ENCODE measurements at regions of chr19 and their contacts with region 1.

Region 1: GRCh38 chr19:2782936-2783780 is at the start of gene SGTA:
- DNase-seq: peak; percentile 82 to 97 (median 95)
- ATAC-seq: peak; percentile 73
- H3K4me3 ChIP-seq: peak within 1 kb of the TSS; percentile 90
- H3K4me3 Mint-ChIP-seq: peak within 1 kb of the TSS; percentile 83 to 98 (median 88)
- H3K27ac ChIP-seq: peak within 1 kb of the TSS; percentile 95
- H3K27ac Mint-ChIP-seq: peak within 1 kb of the TSS; percentile 78 to 97 (median 92)
- H3K4me1 ChIP-seq: peaks cover 33 to 35% of the 10 kb centered on the region in 2 donors
- H3K4me1 Mint-ChIP-seq: peaks cover 29 to 64% (median 51%) of the 10 kb centered on the region in 7 donors
- H3K27me3 ChIP-seq: no peaks in the 10 kb centered on the region
- H3K27me3 Mint-ChIP-seq: no peaks in the 10 kb centered on the region
- total RNA-seq, gene SGTA: 32.2 to 47.8 (median 37.9) TPM

Region 2: DNA sequence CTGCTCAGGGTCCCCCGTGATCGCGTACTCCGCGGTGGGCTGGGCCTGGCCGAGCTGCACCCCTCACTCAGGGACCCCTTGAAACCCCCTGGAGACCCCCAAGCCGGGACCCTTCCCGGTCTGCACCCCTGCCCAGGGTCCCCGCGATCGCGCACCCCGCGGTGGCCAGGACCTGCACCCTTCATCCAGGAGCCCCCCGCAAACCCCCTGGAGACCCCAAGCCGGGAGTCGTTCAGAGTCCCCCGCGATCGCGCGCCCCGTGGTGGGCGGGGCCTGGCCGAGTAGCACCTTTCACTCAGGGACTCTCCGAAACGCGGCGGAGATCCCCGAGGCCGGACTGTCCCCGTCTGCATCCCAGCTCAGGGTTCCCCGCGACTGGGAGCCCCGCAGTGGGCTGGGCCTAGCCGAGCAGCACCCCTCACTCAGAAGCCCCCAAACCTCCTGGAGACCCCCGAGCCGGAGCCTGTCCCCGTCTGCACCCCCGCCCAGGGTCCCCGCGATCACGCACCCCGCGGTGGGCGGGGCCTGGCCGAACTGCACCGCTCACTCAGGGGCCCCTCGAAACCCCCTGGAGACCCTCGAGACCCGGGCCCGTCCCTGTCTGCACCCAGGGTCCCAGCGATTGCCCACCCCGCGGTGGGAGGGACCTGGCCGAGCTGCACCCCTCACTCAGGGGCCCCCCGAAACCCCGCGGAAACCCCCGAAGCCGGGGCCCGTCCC is 327.1 kb before region 1 on chr19:
- CTCF ChIA-PET with region 1: no interaction called
- POLR2A ChIA-PET with region 1: no interaction called
- intact Hi-C with region 1: loop called in 1 of 2 experiments (anchors 2 kb)
- DNase-seq: peak in 5 of 9 donors; percentile 14 to 68 (median 29)
- ATAC-seq: peak; percentile 59
- H3K4me3 ChIP-seq: peak overlapping the region; percentile 79
- H3K4me3 Mint-ChIP-seq: peak overlapping the region; percentile 77 to 90 (median 84)
- H3K27ac ChIP-seq: peak overlapping the region; percentile 86
- H3K27ac Mint-ChIP-seq: peak overlapping the region in 6 of 9 donors; percentile 77 to 88 (median 82)
- H3K4me1 ChIP-seq: peaks cover 14 to 18% of the 10 kb centered on the region in 2 donors
- H3K4me1 Mint-ChIP-seq: peaks cover 14 to 28% (median 18%) of the 10 kb centered on the region in 7 donors
- H3K27me3 ChIP-seq: no peaks in the 10 kb centered on the region
- H3K27me3 Mint-ChIP-seq: no peaks in the 10 kb centered on the region

Region 3: GRCh38 chr19:2820112-2820702 is 37.0 kb after region 1 on chr19:
- CTCF ChIA-PET with region 1: no interaction called
- POLR2A ChIA-PET with region 1: interaction called, 3 read pairs
- intact Hi-C with region 1: loop called (anchors 1 to 2 kb)
- DNase-seq: no peak
- ATAC-seq: no peak
- H3K4me3 ChIP-seq: peak overlapping the region; percentile 79
- H3K4me3 Mint-ChIP-seq: peak overlapping the region; percentile 79 to 90 (median 86)
- H3K27ac ChIP-seq: peak overlapping the region; percentile 76
- H3K27ac Mint-ChIP-seq: peak overlapping the region in 5 of 9 donors; percentile 22 to 80 (median 52)
- H3K4me1 ChIP-seq: peaks cover 3 to 4% of the 10 kb centered on the region in 2 donors
- H3K4me1 Mint-ChIP-seq: peaks cover 3 to 19% (median 6%) of the 10 kb centered on the region in 7 donors
- H3K27me3 ChIP-seq: no peaks in the 10 kb centered on the region
- H3K27me3 Mint-ChIP-seq: no peaks in the 10 kb centered on the region

Region 4: GRCh38 chr19:2944775-2945574 is 161.8 kb after region 1 on chr19 and contains the start of gene ZNF77:
- CTCF ChIA-PET with region 1: no interaction called
- POLR2A ChIA-PET with region 1: no interaction called
- intact Hi-C with region 1: loop called in 1 of 2 experiments (anchors 1 kb)
- DNase-seq: peak; percentile 93 to 99 (median 99)
- ATAC-seq: peak; percentile 99
- H3K4me3 ChIP-seq: peak within 1 kb of the TSS; percentile 86
- H3K4me3 Mint-ChIP-seq: peak within 1 kb of the TSS; percentile 94 to 99 (median 97)
- H3K27ac ChIP-seq: peak within 1 kb of the TSS; percentile 87
- H3K27ac Mint-ChIP-seq: peak within 1 kb of the TSS; percentile 90 to 99 (median 98)
- H3K4me1 ChIP-seq: peaks cover 11 to 15% of the 10 kb centered on the region in 2 donors
- H3K4me1 Mint-ChIP-seq: peaks cover 15 to 43% (median 34%) of the 10 kb centered on the region in 7 donors
- H3K27me3 ChIP-seq: no peaks in the 10 kb centered on the region
- H3K27me3 Mint-ChIP-seq: no peaks in the 10 kb centered on the region
- total RNA-seq, gene ZNF77: 2.0 to 5.8 (median 4.3) TPM

Region 5: GRCh38 chr19:3434712-3435553 is 651.8 kb after region 1 on chr19:
- CTCF ChIA-PET with region 1: no interaction called
- POLR2A ChIA-PET with region 1: no interaction called
- intact Hi-C with region 1: loop called in 1 of 2 experiments (anchors 10 kb)
- DNase-seq: peak; percentile 91 to 97 (median 96)
- ATAC-seq: peak; percentile 99
- H3K4me3 ChIP-seq: peak overlapping the region; percentile 70
- H3K4me3 Mint-ChIP-seq: peak overlapping the region; percentile 87 to 100 (median 96)
- H3K27ac ChIP-seq: peak overlapping the region; percentile 86
- H3K27ac Mint-ChIP-seq: peak overlapping the region; percentile 95 to 99 (median 98)
- H3K4me1 ChIP-seq: peaks cover 9 to 11% of the 10 kb centered on the region in 2 donors
- H3K4me1 Mint-ChIP-seq: peaks cover 7 to 18% (median 14%) of the 10 kb centered on the region in 7 donors
- H3K27me3 ChIP-seq: no peaks in the 10 kb centered on the region
- H3K27me3 Mint-ChIP-seq: no peaks in the 10 kb centered on the region